GM23248 (cell line): ENCODE measurements at regions of chr15 and their contacts with region 1.

Region 1: GRCh38 chr15:98647774-98648653 is at the start of gene IGF1R:
- DNase-seq: peak; percentile 95
- H3K4me3 ChIP-seq: peak within 1 kb of the TSS; percentile 90
- H3K27ac ChIP-seq: peak within 1 kb of the TSS; percentile 86
- H3K4me1 ChIP-seq: peaks cover 13% of the 10 kb centered on the region
- H3K27me3 ChIP-seq: peaks cover 31% of the 10 kb centered on the region
- total RNA-seq, gene IGF1R: 23.6 and 48.6 TPM in 2 replicates

Region 2: GRCh38 chr15:98131924-98132323 is 516.1 kb before region 1 on chr15:
- in situ Hi-C with region 1: no loop called
- DNase-seq: no peak
- H3K4me3 ChIP-seq: no peak overlapping the region
- H3K27ac ChIP-seq: no peak overlapping the region
- H3K4me1 ChIP-seq: no peaks in the 10 kb centered on the region
- H3K27me3 ChIP-seq: no peaks in the 10 kb centered on the region

Region 3: DNA sequence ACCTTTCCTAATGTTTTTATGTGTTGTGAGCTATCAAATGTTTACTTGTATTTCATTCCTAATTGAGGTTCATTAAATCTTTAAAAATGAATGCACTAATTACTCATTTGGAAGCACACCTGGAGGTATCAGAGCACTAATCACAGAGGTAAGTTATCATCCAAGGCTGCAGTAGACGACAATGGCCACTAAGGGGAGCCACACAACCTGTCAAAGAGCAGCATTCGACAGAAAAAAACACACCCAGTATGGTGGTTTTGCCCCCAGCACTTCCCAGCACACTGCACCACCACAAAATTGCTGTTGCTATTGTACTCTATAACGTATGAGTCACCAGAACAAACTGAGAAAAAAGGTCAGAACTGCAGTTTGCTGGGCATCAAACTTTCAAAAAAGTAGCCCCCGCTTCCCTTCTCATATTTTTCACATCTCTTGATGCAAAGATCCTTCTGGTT is 205.6 kb before region 1 on chr15:
- in situ Hi-C with region 1: loop called (anchors 10 kb)
- DNase-seq: peak; percentile 89
- H3K4me3 ChIP-seq: no peak overlapping the region
- H3K27ac ChIP-seq: no peak overlapping the region
- H3K4me1 ChIP-seq: 0 out of 2 replicates have a peak, but pooled peaks cover 3% of the 10 kb centered on the region
- H3K27me3 ChIP-seq: peaks cover 20% of the 10 kb centered on the region

Region 4: GRCh38 chr15:98476559-98476958 is 171.5 kb before region 1 on chr15:
- in situ Hi-C with region 1: no loop called
- DNase-seq: no peak
- H3K4me3 ChIP-seq: no peak overlapping the region
- H3K27ac ChIP-seq: no peak overlapping the region
- H3K4me1 ChIP-seq: no peaks in the 10 kb centered on the region
- H3K27me3 ChIP-seq: no peaks in the 10 kb centered on the region

Region 5: GRCh38 chr15:98518823-98519561 is 129.0 kb before region 1 on chr15:
- in situ Hi-C with region 1: loop called (anchors 10 kb)
- DNase-seq: peak; percentile 85
- H3K4me3 ChIP-seq: peak overlapping the region; percentile 13; the same call in 1 of the 2 replicates
- H3K27ac ChIP-seq: no peak overlapping the region
- H3K4me1 ChIP-seq: no peaks in the 10 kb centered on the region
- H3K27me3 ChIP-seq: no peaks in the 10 kb centered on the region; the same call in 1 of the 2 replicates